PC-3 (cell line): ENCODE measurements at regions of chr3 and their contacts with region 1.

Region 1: DNA sequence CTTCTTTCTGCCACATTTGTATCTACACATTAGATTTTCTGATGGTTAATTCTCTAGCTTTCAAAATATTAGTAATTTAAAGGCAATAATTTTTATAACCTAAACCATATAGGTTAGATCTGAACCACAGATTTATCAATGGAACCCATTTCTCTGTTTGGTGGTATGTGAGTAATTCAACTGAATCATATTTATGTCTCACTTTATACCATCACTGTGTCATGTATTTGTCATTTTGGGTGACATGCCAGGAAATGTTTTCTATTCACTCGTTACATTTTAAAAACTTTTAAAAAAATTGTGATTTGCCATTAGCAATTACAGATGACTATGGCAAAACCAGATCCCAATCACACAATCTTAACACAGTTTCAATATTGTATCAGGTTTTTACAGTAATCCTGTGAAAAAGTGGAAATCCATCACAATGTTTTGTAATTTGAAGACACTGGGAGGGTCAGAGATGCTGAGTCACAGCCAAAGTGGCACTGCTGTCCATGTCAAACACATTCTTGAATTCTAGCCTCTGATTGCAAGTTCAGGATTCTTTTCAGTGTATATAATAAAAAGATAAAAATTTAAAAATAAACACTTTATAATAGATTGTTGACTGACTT is 356.0 kb upstream of the RBMS3 start:
- DNase-seq: peak; percentile 76
- ATAC-seq: peak; percentile 87
- H3K4me3 ChIP-seq: peak overlapping the region; percentile 61
- H3K27ac ChIP-seq: peak overlapping the region; percentile 67
- H3K4me1 ChIP-seq: peaks cover 14% of the 10 kb centered on the region
- H3K27me3 ChIP-seq: no peaks in the 10 kb centered on the region
- CTCF ChIP-seq: no peak

Region 2: GRCh38 chr3:28951773-28952556 is 27.1 kb after region 1 on chr3:
- CTCF ChIA-PET with region 1: no interaction called
- POLR2A ChIA-PET with region 1: no interaction called
- intact Hi-C with region 1: loop called (anchors 2 kb)
- DNase-seq: peak; percentile 77
- ATAC-seq: peak; percentile 97
- H3K4me3 ChIP-seq: no peak overlapping the region; the same call in 1 of the 2 replicates
- H3K27ac ChIP-seq: peak overlapping the region; percentile 71
- H3K4me1 ChIP-seq: peaks cover 20% of the 10 kb centered on the region
- H3K27me3 ChIP-seq: no peaks in the 10 kb centered on the region
- CTCF ChIP-seq: no peak

Region 3: GRCh38 chr3:29137601-29138000 is 212.7 kb after region 1 on chr3:
- CTCF ChIA-PET with region 1: no interaction called
- POLR2A ChIA-PET with region 1: no interaction called
- intact Hi-C with region 1: loop called (anchors 5 kb)
- DNase-seq: peak; percentile 66
- ATAC-seq: peak; percentile 64
- H3K4me3 ChIP-seq: no peak overlapping the region
- H3K27ac ChIP-seq: no peak overlapping the region
- H3K4me1 ChIP-seq: no peaks in the 10 kb centered on the region
- H3K27me3 ChIP-seq: no peaks in the 10 kb centered on the region
- CTCF ChIP-seq: no peak